ENCODE measurements at regions of chr19 and their contacts with region 1.

Region 1: GRCh38 chr19:10431943-10432735 is 11.8 kb downstream of the PDE4A start:
- DNase-seq: peak; percentile 73
- ATAC-seq: peak; percentile 51
- H3K4me3 Mint-ChIP-seq: peak overlapping the region; percentile 88
- H3K27ac Mint-ChIP-seq: peak overlapping the region; percentile 74
- H3K4me1 Mint-ChIP-seq: peaks cover 61% of the 10 kb centered on the region
- H3K27me3 Mint-ChIP-seq: peaks cover 6% of the 10 kb centered on the region
- CTCF ChIP-seq: no peak

Region 2: GRCh38 chr19:10380313-10381102 is 51.6 kb before region 1 on chr19 and contains the start of gene TYK2:
- CTCF ChIA-PET with region 1: no interaction called
- POLR2A ChIA-PET with region 1: interaction called, 16 read pairs
- intact Hi-C with region 1: no loop called
- DNase-seq: peak; percentile 95
- ATAC-seq: peak; percentile 93
- H3K4me3 Mint-ChIP-seq: peak within 1 kb of the TSS; percentile 97
- H3K27ac Mint-ChIP-seq: peak within 1 kb of the TSS; percentile 86
- H3K4me1 Mint-ChIP-seq: peaks cover 23% of the 10 kb centered on the region
- H3K27me3 Mint-ChIP-seq: no peaks in the 10 kb centered on the region
- CTCF ChIP-seq: no peak
- total RNA-seq, gene TYK2: 302 and 356 TPM in 2 replicates

Region 3: GRCh38 chr19:10416380-10417257 is 15.5 kb before region 1 on chr19:
- CTCF ChIA-PET with region 1: interaction called, 33 read pairs
- POLR2A ChIA-PET with region 1: interaction called, 541 read pairs
- intact Hi-C with region 1: loop called (anchors 2 kb)
- DNase-seq: peak; percentile 97
- ATAC-seq: peak; percentile 68
- H3K4me3 Mint-ChIP-seq: peak overlapping the region; percentile 78
- H3K27ac Mint-ChIP-seq: peak overlapping the region; percentile 80
- H3K4me1 Mint-ChIP-seq: peaks cover 70% of the 10 kb centered on the region
- H3K27me3 Mint-ChIP-seq: peaks cover 29% of the 10 kb centered on the region
- CTCF ChIP-seq: peak; percentile 79